Naive thymus-derived CD4-positive, alpha-beta T cell (primary cell): ENCODE measurements at regions of chr3 and their contacts with region 1.

Region 1: DNA sequence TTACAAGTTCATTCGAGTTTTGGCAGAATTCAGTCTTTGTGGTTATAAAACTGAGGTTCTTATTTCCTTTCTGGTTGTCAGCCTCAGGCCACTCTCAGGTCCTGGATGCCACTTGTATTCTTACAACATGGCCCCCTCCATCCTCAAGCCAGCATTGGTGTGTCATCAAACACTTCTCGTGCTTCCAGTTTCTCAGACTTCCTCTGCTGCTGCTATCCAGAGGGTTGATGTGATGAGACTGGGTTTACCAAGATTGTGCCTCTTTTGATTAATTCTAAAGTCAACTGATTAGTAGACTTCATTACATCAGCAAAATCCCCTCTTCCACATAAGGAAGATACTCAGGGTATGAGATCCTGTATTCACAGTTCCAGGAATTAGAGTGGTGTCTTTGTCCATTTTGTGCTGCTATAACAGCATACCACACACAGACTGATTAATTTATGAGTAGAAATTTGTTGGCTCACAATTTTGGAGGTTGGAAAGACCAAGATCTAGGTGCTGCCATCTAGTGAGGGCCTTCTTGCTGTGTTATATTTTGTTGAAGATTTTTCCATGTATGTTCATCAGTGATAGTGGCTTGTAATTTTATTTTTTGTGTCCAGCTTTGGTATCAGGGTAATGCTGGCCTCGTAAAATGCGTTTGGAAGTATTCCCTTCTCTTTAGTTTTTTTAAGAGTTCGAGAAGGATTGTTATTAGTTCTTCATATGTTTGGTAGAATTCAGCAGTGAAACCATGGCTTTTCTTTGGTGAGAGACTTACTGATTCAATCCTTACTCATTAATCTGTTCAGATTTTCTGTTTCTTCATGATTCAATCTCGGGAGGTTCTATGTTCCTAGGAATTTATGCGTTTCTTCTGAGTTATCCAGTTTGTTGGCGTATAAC is 11.1 kb downstream of the LRCH3 start:
- DNase-seq: peak in 5 of 9 donors; percentile 30 to 39 (median 34)
- ATAC-seq: peak; percentile 78
- H3K4me3 ChIP-seq: no peak overlapping the region
- H3K4me3 Mint-ChIP-seq: peak overlapping the region in 7 of 10 donors; percentile 12 to 35 (median 19)
- H3K27ac ChIP-seq: no peak overlapping the region
- H3K27ac Mint-ChIP-seq: peak overlapping the region; percentile 44 to 81 (median 57)
- H3K4me1 ChIP-seq: peaks cover 13 to 21% of the 10 kb centered on the region in 2 donors
- H3K4me1 Mint-ChIP-seq: peaks cover 35 to 59% (median 53%) of the 10 kb centered on the region in 7 donors
- H3K27me3 ChIP-seq: no peaks in the 10 kb centered on the region
- H3K27me3 Mint-ChIP-seq: no peaks in the 10 kb centered on the region

Region 2: DNA sequence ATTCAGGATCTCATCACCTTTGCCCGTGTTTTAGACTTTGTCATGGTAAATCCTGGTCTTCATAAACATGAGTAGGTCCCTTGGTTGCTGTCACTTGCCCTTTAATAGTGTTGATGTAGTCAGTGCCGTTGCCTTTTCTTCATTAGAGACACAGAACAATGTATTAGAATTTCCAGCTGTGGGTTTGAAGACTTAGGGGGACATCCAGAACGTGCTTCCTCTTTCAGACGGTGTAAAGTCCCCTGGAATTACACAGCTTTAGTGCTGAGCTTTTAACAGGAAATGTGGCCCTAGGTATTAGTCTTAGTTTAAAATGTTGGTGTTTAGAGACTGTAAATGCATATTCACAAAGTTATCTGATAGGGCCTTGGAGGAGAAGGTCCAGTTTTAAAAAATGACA is 19.9 kb before region 1 on chr3:
- CTCF ChIA-PET with region 1: interaction called, 4 read pairs
- POLR2A ChIA-PET with region 1: no interaction called
- intact Hi-C with region 1: loop called in 1 of 2 experiments (anchors 2 kb)
- DNase-seq: no peak
- ATAC-seq: no peak
- H3K4me3 ChIP-seq: no peak overlapping the region
- H3K4me3 Mint-ChIP-seq: no peak overlapping the region
- H3K27ac ChIP-seq: no peak overlapping the region
- H3K27ac Mint-ChIP-seq: peak overlapping the region in 3 of 9 donors; percentile 1 to 73 (median 9)
- H3K4me1 ChIP-seq: no peaks in the 10 kb centered on the region
- H3K4me1 Mint-ChIP-seq: peaks cover 0 to 10% (median 0%) of the 10 kb centered on the region in 7 donors
- H3K27me3 ChIP-seq: no peaks in the 10 kb centered on the region
- H3K27me3 Mint-ChIP-seq: no peaks in the 10 kb centered on the region

Region 3: GRCh38 chr3:197835509-197835908 is 33.4 kb after region 1 on chr3:
- CTCF ChIA-PET with region 1: no interaction called
- POLR2A ChIA-PET with region 1: no interaction called
- intact Hi-C with region 1: no loop called
- DNase-seq: no peak
- ATAC-seq: no peak
- H3K4me3 ChIP-seq: no peak overlapping the region
- H3K4me3 Mint-ChIP-seq: no peak overlapping the region
- H3K27ac ChIP-seq: no peak overlapping the region
- H3K27ac Mint-ChIP-seq: peak overlapping the region in 2 of 9 donors; percentile 3 to 45
- H3K4me1 ChIP-seq: no peaks in the 10 kb centered on the region
- H3K4me1 Mint-ChIP-seq: peaks cover 0 to 6% (median 0%) of the 10 kb centered on the region in 7 donors
- H3K27me3 ChIP-seq: no peaks in the 10 kb centered on the region
- H3K27me3 Mint-ChIP-seq: no peaks in the 10 kb centered on the region